Activated naive CD4-positive, alpha-beta T cell treated with anti-CD3 and anti-CD28 coated beads, Interleukin-2, amount 10 ng/mL, durations not matched to agents 7 days and 5 days (primary cell): ENCODE measurements at regions of chr14 and their contacts with region 1.

Region 1: GRCh38 chr14:68862954-68863594 is 70.2 kb upstream of the ZFP36L1 start:
- DNase-seq: peak; percentile 85
- H3K4me3 Mint-ChIP-seq: no peak overlapping the region
- H3K27ac Mint-ChIP-seq: no peak overlapping the region
- H3K4me1 Mint-ChIP-seq: no peaks in the 10 kb centered on the region
- H3K27me3 Mint-ChIP-seq: peaks cover 12% of the 10 kb centered on the region

Region 2: GRCh38 chr14:68843471-68844209 is 19.4 kb before region 1 on chr14:
- CTCF ChIA-PET with region 1: interaction called, 13 read pairs
- DNase-seq: peak; percentile 83
- H3K4me3 Mint-ChIP-seq: no peak overlapping the region
- H3K27ac Mint-ChIP-seq: no peak overlapping the region
- H3K4me1 Mint-ChIP-seq: peaks cover 18% of the 10 kb centered on the region
- H3K27me3 Mint-ChIP-seq: peaks cover 16% of the 10 kb centered on the region

Region 3: DNA sequence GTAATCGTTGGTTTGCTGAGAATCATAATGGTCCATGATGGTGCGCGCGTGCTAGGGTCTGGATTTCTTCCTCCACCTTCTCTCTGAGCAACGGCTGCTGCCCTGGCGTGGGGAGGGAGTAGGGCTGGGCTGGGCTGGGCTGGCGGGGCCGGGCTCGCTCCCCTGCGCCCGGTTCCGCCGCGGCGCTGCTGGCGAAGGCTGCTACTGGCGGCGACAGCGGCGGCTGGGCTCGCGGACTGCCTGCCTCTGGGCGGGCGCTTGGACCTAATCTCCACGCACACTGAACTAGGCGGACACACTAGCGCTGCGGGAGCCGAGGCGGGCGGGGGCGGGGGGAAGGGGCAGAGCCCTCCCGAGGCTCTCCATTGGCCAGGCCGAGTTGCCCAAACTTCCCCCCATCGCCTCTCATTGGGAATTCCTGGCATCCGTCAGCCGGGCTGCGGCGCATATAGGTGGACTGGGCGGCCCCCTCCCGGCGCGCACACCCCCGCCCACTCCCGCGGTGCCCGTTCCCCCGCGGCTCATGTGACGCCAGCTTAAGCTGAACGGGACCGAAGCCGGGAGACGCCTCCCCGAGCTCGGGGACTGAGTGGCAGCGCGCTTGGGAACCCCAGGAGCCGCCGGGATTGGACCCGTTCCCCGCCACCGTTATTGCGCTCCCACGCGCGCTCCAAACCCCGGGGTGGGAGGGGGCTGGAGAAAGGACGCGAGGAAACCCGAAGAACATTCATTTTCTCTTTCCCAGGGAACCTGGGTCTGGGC is 116.1 kb after region 1 on chr14 and contains the start of gene ACTN1:
- CTCF ChIA-PET with region 1: no interaction called
- DNase-seq: peak; percentile 68
- H3K4me3 Mint-ChIP-seq: peak within 1 kb of the TSS; percentile 88
- H3K27ac Mint-ChIP-seq: peak within 1 kb of the TSS; percentile 82
- H3K4me1 Mint-ChIP-seq: peaks cover 37% of the 10 kb centered on the region
- H3K27me3 Mint-ChIP-seq: peaks cover 63% of the 10 kb centered on the region

Region 4: DNA sequence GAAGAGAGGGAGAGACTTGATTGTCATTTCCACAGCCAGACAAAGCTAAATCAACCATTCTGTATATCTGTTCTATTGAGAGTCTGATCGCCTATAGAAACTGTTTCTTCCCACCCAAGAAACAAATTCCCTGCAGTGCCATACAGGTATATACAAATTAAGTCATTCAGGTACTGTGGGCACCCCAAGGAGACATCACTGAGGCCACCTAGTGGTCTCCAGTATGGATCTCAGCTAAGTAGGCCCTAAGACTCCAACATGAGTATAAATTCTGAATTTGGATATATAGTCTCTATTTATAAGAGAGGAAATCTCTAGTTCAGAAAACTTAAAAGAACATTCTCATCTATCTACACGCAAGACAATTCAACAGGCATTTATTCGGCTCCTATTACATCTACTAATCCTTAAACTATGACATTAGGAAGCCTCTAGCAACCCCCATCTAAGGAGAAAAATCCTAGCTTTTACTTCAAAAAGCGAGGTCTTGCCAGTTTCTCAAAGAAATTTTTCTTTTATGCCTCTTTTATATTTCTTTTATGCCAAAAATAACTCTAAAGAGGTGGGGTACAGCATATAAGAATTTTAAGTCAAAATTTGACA is 227.2 kb after region 1 on chr14:
- CTCF ChIA-PET with region 1: interaction called, 36 read pairs
- DNase-seq: peak; percentile 56
- H3K4me3 Mint-ChIP-seq: no peak overlapping the region
- H3K27ac Mint-ChIP-seq: no peak overlapping the region
- H3K4me1 Mint-ChIP-seq: peaks cover 12% of the 10 kb centered on the region
- H3K27me3 Mint-ChIP-seq: no peaks in the 10 kb centered on the region

Region 5: GRCh38 chr14:69101331-69101826 is 238.3 kb after region 1 on chr14:
- CTCF ChIA-PET with region 1: interaction called, 50 read pairs
- DNase-seq: no peak
- H3K4me3 Mint-ChIP-seq: no peak overlapping the region
- H3K27ac Mint-ChIP-seq: peak overlapping the region; percentile 33
- H3K4me1 Mint-ChIP-seq: peaks cover 10% of the 10 kb centered on the region
- H3K27me3 Mint-ChIP-seq: no peaks in the 10 kb centered on the region

Region 6: DNA sequence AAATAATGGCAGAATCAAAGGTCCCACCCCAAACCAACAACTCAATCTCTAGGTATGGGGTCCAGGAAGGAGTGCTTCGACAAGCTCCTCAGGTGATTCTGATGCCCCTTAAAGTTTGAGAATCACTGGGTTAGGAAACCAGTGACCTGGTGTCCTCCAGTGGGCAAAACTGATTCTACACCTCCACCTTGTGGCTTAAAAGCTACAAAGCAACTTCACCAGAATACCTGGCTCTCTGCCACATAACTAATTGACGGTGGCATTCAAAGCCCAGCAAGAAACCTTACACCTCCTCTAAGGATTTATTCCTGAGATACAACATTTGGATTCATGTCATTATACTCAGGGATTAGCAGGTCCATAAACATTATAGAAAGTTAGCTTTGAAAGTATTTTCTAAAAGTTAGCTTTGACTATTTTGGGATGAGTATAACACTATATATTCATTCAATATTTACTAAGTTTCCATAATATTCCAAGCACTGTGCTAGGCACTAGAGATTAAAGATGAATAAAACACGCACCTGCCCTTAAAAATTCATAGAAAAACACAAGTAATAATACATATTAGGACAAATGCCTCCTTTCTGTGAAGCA is 244.4 kb after region 1 on chr14:
- CTCF ChIA-PET with region 1: interaction called, 50 read pairs
- DNase-seq: peak; percentile 36
- H3K4me3 Mint-ChIP-seq: no peak overlapping the region
- H3K27ac Mint-ChIP-seq: no peak overlapping the region
- H3K4me1 Mint-ChIP-seq: no peaks in the 10 kb centered on the region
- H3K27me3 Mint-ChIP-seq: no peaks in the 10 kb centered on the region